Calu3 (cell line): ENCODE measurements at regions of chr2 and their contacts with region 1.

Region 1: DNA sequence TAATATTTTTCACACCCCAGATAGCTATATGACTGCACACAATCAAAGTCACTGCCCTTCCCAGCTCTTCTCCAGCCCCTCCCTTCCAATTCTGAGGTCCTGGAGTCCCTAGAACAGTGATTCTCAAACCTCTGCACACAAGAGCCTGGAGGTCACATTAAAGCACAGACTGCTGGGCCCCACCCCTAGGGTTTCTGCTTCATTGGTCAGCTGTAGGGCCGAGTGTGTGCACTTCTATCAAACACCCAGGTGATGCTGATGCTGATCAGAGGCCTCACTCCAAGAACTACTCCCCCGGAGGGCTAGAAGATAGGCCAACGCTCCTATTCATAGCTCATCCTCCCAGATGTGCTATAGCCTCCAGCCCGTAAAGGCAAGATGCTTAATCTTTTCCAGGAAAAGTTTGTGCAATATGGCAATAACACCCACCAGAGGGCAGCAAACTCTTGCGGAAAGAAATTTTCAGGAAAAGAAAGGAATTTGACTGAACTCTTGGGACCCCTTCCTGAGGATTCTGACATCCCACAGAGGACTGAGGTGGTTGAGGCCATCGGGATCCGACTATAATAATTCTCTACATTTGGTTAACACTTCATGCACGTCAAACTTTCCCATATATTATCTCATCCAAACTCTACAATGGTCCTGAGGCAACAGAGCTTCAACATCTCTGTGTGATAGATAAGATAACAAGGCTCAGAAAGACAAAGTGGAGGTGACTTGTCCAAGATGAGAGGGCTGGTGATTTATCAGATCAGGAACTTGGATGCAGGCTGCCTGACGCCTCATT is 194.2 kb upstream of the PKDCC start:
- DNase-seq: peak; percentile 66
- H3K4me3 Mint-ChIP-seq: no peak overlapping the region
- H3K27ac Mint-ChIP-seq: no peak overlapping the region
- H3K4me1 Mint-ChIP-seq: peaks cover 2% of the 10 kb centered on the region
- H3K27me3 Mint-ChIP-seq: no peaks in the 10 kb centered on the region
- CTCF ChIP-seq: peak; percentile 76

Region 2: GRCh38 chr2:42086500-42086953 is 232.9 kb after region 1 on chr2:
- CTCF ChIA-PET with region 1: interaction called, 17 read pairs
- intact Hi-C with region 1: loop called (anchors 1 kb)
- DNase-seq: peak; percentile 60
- H3K4me3 Mint-ChIP-seq: no peak overlapping the region
- H3K27ac Mint-ChIP-seq: no peak overlapping the region
- H3K4me1 Mint-ChIP-seq: peaks cover 9% of the 10 kb centered on the region
- H3K27me3 Mint-ChIP-seq: no peaks in the 10 kb centered on the region
- CTCF ChIP-seq: peak; percentile 76

Region 3: DNA sequence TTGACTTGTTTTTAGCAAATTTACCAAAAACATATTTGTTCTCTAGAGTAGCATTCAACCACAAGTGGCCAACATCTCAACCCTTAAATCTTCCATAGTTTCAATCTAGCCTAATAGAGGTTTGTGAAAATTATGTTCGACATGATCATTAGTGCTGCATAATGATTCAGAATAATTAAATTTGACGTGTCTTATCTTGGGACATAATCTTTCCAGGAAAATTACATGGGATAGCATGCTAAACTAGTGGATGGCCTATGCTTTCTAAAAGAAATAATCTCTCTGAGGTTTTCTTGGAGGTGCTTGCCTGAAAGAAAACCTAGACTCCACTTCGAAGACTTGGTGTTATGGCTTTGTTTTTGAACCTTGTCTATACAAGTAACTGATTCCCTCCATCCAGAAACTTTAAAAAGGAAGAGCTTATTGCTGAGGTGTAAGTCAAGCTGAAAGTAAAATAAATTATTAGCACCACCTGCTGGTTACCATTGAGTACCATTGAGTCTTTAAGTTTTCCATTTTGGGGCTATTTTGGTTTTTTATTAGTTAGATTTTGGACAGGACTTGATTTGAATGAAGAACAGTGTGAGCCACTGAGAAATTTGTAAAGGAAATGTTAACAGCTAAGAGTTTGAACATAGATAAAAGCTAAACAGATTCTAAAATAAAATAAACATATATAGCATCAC is 474.7 kb after region 1 on chr2:
- CTCF ChIA-PET with region 1: no interaction called
- intact Hi-C with region 1: loop called (anchors 10 kb)
- DNase-seq: no peak
- H3K4me3 Mint-ChIP-seq: no peak overlapping the region
- H3K27ac Mint-ChIP-seq: no peak overlapping the region
- H3K4me1 Mint-ChIP-seq: no peaks in the 10 kb centered on the region
- H3K27me3 Mint-ChIP-seq: no peaks in the 10 kb centered on the region
- CTCF ChIP-seq: peak; percentile 36